ENCODE measurements at regions of chr15 and their contacts with region 1.

Region 1: DNA sequence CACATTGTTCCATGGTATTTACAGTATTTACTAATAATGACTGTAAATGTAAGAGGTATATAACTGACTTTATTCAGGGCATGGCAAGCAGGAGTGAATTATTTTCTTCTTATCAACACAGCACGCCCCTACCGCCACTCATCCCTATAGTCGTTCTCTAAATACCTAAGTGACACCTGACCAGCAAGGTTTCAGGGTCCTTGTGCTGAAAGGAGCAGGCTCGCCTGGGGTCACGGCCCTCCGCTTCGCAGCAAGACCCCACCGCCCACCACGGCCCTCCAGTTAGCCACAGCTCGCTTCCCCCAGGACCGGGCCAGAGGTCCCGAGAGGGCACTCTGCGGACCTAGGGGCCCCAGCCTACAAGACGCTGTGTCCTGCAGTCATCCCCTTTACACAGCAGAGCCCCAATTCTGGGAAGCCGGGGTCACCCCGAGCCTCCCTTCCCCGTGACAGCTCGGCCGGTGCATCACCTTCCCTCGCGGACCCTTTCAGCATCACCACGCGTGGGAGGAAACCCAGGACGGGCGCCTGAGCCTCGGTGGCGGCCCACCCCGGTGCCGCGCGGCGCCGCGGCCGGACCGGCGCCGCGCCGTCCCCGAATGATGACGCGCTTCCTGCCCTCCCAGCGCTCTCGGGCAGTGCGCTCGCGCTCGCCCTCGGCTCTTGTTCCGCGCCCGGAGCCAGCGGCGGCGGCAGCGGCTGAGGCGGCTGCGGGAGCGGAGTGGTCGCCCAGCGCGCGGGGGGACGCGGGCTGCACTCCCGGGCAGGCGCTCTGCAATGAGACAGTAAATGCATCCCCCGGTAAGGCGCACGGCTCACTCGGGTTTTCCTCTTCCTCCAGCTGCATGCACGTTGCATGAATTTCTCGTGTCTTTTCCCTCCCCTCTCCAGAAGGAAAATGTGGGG is 225.1 kb upstream of the C2CD4B start:
- DNase-seq: peak; percentile 82
- H3K4me3 Mint-ChIP-seq: peak within 1 kb of the TSS; percentile 95
- H3K27ac Mint-ChIP-seq: peak within 1 kb of the TSS; percentile 91
- H3K4me1 Mint-ChIP-seq: peaks cover 19% of the 10 kb centered on the region
- H3K27me3 Mint-ChIP-seq: peaks cover 4% of the 10 kb centered on the region
- CTCF ChIP-seq: no peak

Region 2: DNA sequence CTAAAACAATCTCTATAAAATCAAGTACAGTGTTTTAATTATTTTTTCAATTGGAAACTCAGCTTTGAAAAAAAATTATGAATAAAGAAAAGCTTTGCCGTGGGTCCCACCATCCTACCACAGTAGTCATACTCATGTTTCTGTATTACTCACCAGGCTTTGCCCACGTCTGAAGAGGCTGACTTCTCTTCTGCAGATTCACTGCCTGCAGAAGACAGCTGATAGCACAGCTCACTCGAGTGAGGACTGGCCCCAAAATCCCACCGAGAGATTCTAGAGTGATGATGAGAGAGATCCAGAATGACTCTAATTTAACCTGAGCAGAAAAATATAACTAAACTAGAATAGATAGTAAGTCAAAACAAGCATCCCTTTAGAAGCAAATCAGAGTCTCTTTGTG is 236.9 kb before region 1 on chr15:
- CTCF ChIA-PET with region 1: no interaction called
- intact Hi-C with region 1: no loop called
- DNase-seq: no peak
- H3K4me3 Mint-ChIP-seq: no peak overlapping the region
- H3K27ac Mint-ChIP-seq: no peak overlapping the region
- H3K4me1 Mint-ChIP-seq: peaks cover 11% of the 10 kb centered on the region
- H3K27me3 Mint-ChIP-seq: no peaks in the 10 kb centered on the region
- CTCF ChIP-seq: no peak

Region 3: DNA sequence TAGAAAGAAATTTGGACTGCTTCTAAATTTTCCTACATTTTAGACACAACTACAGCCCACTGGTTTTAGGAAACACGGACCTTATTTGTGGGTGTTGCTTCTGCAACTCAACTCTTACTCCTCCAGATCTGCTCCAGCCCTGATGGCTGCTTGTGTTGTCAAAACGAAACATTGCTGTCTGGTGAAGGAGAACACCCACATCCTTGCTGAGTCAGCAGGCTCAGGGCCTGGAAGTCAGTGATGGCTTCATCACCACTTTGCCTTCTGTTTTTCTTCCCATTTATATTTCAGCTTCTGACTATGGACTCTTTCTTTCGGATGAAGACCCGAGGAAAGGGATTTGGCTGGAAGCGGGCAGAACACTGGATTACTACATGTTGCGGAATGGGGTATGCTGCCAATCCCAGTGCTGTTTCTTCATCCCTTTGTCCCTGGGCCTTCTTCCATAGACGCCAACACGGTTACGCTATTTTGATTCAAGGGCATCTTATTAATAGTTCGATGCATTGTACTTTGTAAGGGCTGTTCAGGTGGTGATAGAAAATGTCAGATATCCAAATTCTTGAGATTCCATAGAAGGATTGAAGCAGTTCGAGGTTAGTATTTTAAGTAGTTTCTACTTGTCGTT is 259.8 kb after region 1 on chr15:
- CTCF ChIA-PET with region 1: no interaction called
- intact Hi-C with region 1: loop called (anchors 5 kb)
- DNase-seq: no peak
- H3K4me3 Mint-ChIP-seq: no peak overlapping the region
- H3K27ac Mint-ChIP-seq: no peak overlapping the region
- H3K4me1 Mint-ChIP-seq: peaks cover 12% of the 10 kb centered on the region
- H3K27me3 Mint-ChIP-seq: peaks cover 3% of the 10 kb centered on the region
- CTCF ChIP-seq: no peak

Region 4: DNA sequence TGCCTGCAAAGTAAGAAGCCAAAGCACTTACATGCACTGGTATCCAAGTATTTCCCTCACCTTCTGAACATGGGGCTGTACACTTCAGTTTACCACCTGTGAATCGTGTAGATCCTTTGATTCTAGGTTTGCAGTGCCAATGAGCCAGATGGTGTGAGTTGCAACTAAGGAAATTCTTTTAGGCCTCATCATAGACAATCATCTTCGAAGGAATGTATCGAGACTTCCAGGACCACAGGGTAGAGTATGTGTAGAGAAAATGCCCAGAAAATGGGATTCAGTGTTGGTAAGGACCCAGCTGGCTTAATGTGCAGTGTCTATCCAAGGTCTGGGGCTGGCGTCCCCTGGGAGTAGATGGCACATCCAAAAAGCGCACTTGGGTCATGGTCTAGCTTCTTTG is 329.2 kb after region 1 on chr15:
- CTCF ChIA-PET with region 1: no interaction called
- intact Hi-C with region 1: no loop called
- DNase-seq: no peak
- H3K4me3 Mint-ChIP-seq: no peak overlapping the region
- H3K27ac Mint-ChIP-seq: no peak overlapping the region
- H3K4me1 Mint-ChIP-seq: no peaks in the 10 kb centered on the region
- H3K27me3 Mint-ChIP-seq: no peaks in the 10 kb centered on the region
- CTCF ChIP-seq: no peak

Region 5: DNA sequence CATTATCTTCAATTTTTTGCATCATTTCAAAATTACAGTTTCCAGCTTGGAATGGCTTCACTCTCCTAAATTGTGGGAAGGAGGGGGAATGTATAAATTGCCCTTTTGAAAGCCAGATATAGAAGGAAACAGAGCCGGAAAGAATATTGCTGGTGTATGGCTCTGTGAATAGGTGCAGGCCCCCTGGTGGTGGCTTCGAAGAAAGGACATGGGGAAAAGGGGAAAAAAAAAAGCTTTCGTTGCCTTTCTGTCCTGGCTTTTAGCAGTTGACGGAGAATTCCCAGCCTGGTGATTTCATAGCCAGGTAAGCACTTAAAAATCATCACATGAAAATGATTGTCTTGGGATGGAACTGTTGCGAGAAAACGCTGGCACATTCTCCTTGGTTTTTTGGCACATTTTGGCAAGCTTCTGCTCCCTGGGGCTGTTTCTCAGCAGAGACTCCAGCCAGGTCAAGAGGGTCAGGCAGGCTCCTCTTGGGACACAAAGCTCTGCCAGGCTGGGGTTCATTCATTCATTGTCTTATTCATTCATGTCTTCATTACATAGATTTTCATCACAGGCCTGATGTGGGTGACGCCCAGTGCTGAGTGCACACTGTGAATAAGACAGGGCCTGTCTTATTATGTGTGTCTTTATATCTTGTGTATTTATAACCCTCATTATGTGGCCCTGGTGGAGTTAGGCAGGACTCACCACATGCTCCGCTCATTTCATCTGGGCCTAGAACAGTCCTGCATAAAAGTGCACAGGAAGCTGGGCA is 352.5 kb after region 1 on chr15:
- CTCF ChIA-PET with region 1: interaction called, 15 read pairs
- intact Hi-C with region 1: loop called (anchors 2 kb)
- DNase-seq: peak; percentile 72
- H3K4me3 Mint-ChIP-seq: peak overlapping the region; percentile 26
- H3K27ac Mint-ChIP-seq: no peak overlapping the region
- H3K4me1 Mint-ChIP-seq: peaks cover 29% of the 10 kb centered on the region
- H3K27me3 Mint-ChIP-seq: no peaks in the 10 kb centered on the region
- CTCF ChIP-seq: peak; percentile 76

Measured in Calu3 (cell line).